ENCODE measurements at regions of chr3 and their contacts with region 1.

Region 1: DNA sequence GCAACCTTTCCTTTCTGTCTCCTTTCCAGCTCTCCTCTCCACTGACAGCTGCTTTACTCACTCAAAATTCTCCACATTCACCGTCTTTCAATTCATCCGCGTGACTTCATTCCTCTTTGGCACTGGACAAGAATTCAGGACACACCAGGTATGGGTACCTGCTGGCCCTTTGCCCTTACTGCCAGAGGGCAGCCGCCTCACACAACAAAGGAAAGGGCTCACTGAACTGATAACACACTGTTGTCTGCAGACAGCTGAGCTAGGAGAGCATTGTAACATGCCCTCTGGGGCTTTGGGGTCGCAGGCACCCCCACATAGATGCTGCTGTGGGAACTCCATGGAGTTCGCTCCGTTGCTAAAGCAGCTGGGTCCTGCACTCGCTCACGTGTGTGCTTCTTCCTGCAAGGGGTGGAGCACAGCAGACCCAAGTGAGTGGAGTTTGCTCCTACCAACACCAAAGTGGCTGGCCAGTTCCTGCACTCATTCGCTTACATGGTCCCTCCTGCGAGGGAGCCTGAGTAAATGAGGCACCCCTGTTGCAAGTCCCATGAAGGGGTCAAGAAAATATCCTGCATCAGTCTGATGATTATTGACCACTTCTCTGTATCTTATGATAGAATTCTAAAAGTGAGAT is 79.0 kb upstream of the SGO1 start:
- DNase-seq: no peak
- H3K4me3 Mint-ChIP-seq: no peak overlapping the region
- H3K27ac Mint-ChIP-seq: no peak overlapping the region
- H3K4me1 Mint-ChIP-seq: no peaks in the 10 kb centered on the region
- H3K27me3 Mint-ChIP-seq: peaks cover 2% of the 10 kb centered on the region

Region 2: GRCh38 chr3:20280257-20280656 is 15.2 kb after region 1 on chr3:
- CTCF ChIA-PET with region 1: no interaction called
- intact Hi-C with region 1: loop called (anchors 1 kb)
- DNase-seq: no peak
- H3K4me3 Mint-ChIP-seq: no peak overlapping the region
- H3K27ac Mint-ChIP-seq: no peak overlapping the region
- H3K4me1 Mint-ChIP-seq: peaks cover 6% of the 10 kb centered on the region
- H3K27me3 Mint-ChIP-seq: peaks cover 7% of the 10 kb centered on the region

Region 3: GRCh38 chr3:20376665-20377217 is 111.7 kb after region 1 on chr3:
- CTCF ChIA-PET with region 1: no interaction called
- intact Hi-C with region 1: no loop called
- DNase-seq: no peak
- H3K4me3 Mint-ChIP-seq: no peak overlapping the region
- H3K27ac Mint-ChIP-seq: no peak overlapping the region
- H3K4me1 Mint-ChIP-seq: no peaks in the 10 kb centered on the region
- H3K27me3 Mint-ChIP-seq: no peaks in the 10 kb centered on the region

Measured in activated naive CD4-positive, alpha-beta T cell treated with anti-CD3 and anti-CD28 coated beads for 36 hours (primary cell).